PC-9 (cell line): ENCODE measurements at regions of chr7 and their contacts with region 1.

Region 1: GRCh38 chr7:38699471-38699870 is 68.3 kb upstream of the AMPH start:
- DNase-seq: no peak
- H3K4me3 ChIP-seq: no peak overlapping the region
- H3K27ac ChIP-seq: no peak overlapping the region
- H3K4me1 ChIP-seq: no peaks in the 10 kb centered on the region
- H3K27me3 ChIP-seq: peaks cover 67% of the 10 kb centered on the region
- CTCF ChIP-seq: no peak

Region 2: DNA sequence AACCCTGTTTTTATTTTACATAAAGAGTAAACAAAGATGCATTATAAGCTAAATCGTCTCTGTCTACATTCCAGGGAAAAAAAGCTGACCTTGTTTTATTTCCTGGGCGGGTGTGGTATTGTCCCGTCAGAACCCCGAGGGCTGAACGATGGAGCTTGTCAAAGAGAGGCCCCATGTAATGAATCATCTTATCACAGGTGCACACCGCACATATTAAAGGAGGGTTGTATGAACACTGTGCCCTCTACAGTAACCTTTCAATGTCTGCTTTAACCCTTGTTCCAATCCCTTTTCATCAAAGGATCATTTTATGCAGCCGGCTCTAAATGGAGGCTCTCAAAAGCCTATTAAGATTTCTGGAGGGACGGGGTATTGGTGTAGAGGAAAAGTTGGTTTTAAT is 708.3 kb after region 1 on chr7:
- CTCF ChIA-PET with region 1: no interaction called
- POLR2A ChIA-PET with region 1: interaction called, 32 read pairs
- intact Hi-C with region 1: no loop called
- DNase-seq: no peak
- H3K4me3 ChIP-seq: no peak overlapping the region
- H3K27ac ChIP-seq: no peak overlapping the region
- H3K4me1 ChIP-seq: no peaks in the 10 kb centered on the region
- H3K27me3 ChIP-seq: peaks cover 67% of the 10 kb centered on the region
- CTCF ChIP-seq: no peak